AG04449 (cell line): ENCODE measurements at regions of chr11 and their contacts with region 1.

Region 1: DNA sequence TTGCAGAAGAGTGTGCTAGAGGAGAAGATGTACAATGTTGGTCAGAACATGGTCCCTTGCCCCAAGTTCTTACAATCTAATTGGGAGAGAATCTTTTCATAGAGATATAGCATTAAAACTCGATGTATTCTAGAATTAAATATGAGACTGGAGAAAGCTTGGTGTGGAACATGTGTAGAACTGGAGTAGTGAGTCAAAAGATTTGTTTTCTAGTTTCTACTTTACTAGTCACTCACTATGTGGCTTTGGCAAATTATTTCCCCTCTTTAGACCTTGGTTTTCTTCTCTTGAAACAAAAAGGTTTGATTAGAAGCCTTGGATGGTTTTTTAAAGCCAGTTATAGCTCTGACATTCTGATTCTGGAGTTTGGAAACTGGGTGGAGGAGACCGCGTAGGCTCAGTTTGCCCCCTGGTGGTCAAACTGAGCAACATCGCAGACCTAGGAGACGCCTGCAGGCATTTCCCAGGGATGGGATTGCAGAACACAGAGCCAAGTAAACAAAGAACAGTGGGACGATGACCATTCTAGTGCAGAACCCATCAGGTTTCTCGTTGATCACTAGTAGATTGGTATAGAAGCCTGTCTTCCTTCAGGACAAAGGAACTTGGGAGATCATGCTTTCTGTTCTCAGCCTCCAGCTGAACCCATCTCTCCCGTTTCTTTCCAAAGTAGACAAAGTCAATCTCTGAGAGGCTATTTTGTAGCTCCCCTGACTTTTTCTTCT is 8.5 kb upstream of the CHRDL2 start:
- DNase-seq: no peak
- H3K4me3 ChIP-seq: no peak overlapping the region
- CTCF ChIP-seq: peak; percentile 78

Region 2: GRCh38 chr11:74611369-74611861 is 128.3 kb before region 1 on chr11:
- CTCF ChIA-PET with region 1: interaction called, 105 read pairs
- POLR2A ChIA-PET with region 1: no interaction called
- DNase-seq: peak; percentile 64
- H3K4me3 ChIP-seq: no peak overlapping the region
- CTCF ChIP-seq: peak; percentile 38

Region 3: DNA sequence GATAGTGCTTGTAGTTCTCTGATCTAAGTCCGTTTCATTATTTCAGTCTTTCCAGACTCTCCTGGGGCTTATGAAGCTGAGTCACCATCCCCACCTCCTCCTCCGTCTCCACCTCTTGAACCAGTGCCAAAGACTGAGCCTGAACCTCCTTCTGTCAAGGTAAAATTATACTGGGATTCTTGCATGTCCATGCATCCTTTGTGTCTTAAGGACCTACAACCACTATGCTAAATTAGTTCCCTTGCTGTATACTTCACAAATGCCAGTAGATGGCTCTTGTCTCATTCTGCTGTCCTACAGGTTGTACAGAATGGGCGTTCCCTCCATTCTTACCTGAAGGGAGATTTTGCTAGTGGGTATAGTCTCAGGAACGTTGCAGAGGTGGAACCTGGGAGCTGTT is 105.2 kb before region 1 on chr11:
- CTCF ChIA-PET with region 1: interaction called, 21 read pairs
- POLR2A ChIA-PET with region 1: no interaction called
- DNase-seq: no peak
- H3K4me3 ChIP-seq: no peak overlapping the region
- CTCF ChIP-seq: peak; percentile 32

Region 4: GRCh38 chr11:74702383-74703007 is 37.2 kb before region 1 on chr11:
- CTCF ChIA-PET with region 1: interaction called, 64 read pairs
- POLR2A ChIA-PET with region 1: no interaction called
- DNase-seq: no peak
- H3K4me3 ChIP-seq: no peak overlapping the region
- CTCF ChIP-seq: peak; percentile 98

Region 5: DNA sequence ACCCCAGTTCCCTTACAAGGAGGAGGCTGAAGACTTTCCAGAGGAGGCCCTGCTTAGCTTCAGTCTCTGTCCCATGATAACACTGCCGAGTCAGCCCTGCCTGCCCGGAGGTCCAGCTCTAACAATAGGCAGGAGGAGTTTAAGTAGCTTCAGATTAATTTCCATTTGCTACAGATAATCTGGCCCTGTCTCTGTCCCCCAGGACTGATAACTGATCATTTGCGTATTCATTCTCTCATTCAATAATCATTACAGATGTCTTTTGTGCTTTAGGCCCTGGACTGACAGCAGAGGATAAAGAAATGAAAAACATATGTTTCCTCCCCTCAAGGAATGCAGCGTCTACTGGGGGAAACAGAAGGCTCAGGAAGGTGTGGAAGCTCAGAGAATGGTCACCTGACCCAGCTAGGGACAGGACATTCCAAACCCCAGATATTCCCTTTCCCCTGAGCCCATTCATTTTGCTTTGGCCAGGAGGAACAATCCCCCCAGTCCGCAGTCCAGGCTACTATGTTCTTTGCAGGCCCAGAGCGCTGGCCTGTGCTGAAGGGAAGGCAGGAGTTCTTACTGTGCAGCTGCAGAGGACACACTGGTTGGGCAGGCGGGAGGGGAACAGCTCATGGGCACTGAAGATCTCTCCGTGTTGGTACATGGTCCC is 29.3 kb before region 1 on chr11:
- CTCF ChIA-PET with region 1: interaction called, 16 read pairs
- POLR2A ChIA-PET with region 1: no interaction called
- DNase-seq: no peak
- H3K4me3 ChIP-seq: no peak overlapping the region
- CTCF ChIP-seq: no peak

Region 6: DNA sequence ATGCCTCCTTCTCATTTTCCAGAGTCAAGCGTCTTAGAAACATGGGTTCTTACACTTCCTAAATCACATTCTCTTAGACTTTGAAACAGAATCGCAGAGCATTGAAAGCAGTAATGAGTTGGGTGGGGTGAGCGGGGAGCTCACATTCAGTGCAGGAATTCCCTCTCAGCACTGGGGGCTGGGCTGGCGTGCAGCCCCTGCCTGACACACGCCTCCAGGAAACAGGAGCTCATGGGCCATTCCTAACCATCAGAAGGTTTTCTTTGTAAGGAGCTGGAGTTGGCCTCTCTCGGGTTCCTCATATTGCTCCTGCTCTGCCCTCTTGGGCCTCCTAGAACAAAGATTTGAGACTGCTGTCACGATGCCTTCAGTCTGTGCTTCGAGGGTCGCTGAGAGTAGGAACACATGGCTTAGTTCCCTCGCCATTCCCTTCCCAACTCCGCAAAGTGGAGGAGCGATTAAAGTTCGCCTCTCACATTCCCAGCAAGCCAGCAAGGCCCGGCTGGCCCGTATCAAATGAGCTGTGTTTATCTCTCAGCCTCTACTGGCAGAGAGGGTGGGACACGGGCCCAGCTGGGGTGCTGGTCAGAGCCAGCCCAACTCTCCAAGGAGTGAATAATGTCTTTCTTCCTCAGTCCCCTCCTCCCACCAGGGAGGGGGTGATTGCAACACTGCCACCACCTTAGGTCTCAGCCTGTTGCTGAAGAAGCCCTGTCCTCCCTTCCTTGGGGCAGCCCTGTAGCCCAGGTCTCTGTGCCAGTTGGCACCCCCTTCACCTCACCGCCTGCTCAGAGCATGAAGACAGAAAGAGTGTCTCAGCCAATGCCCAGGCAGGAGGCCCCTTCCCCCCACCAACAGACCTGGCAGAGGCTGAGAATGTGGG is 18.9 kb before region 1 on chr11:
- CTCF ChIA-PET with region 1: interaction called, 122 read pairs
- POLR2A ChIA-PET with region 1: no interaction called
- DNase-seq: no peak
- H3K4me3 ChIP-seq: no peak overlapping the region
- CTCF ChIP-seq: no peak

Region 7: GRCh38 chr11:74754507-74755255 is 15.0 kb after region 1 on chr11:
- CTCF ChIA-PET with region 1: interaction called, 37 read pairs
- POLR2A ChIA-PET with region 1: no interaction called
- DNase-seq: peak; percentile 89
- H3K4me3 ChIP-seq: peak overlapping the region; percentile 23
- CTCF ChIP-seq: no peak

Region 8: DNA sequence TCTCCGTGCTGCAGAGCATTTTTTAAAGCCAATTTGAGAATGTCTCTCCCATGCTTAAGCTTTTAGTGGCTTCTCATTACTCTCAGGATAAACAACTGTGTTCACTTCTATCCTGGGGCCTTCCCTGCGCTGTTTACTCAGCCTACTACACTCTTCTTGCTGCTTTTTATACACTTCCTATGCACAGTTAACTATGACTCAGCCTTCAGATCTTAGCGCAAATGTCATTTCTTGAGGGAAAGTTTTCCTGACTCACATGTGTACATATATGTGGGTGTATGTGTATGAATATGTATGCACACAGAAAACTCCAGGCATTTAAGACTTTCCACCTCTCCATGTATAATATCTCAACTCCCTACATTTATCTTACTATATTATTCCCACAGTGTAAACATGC is 1631.5 kb after region 1 on chr11:
- CTCF ChIA-PET with region 1: no interaction called
- POLR2A ChIA-PET with region 1: no interaction called
- DNase-seq: peak; percentile 40
- H3K4me3 ChIP-seq: no peak overlapping the region
- CTCF ChIP-seq: no peak